Gastrocnemius medialis (tissue), 4 donors: ENCODE measurements at regions of chrX and their contacts with region 1.

Region 1: GRCh38 chrX:129606918-129607317 is 47.8 kb downstream of the APLN start:
- DNase-seq: no peak
- ATAC-seq: peak; percentile 65 to 68
- H3K4me3 ChIP-seq: no peak overlapping the region
- H3K27ac ChIP-seq: no peak overlapping the region
- H3K4me1 ChIP-seq: peaks cover 2 to 5% of the 10 kb centered on the region in 2 donors
- H3K27me3 ChIP-seq: no peaks in the 10 kb centered on the region
- CTCF ChIP-seq: peak; percentile 64 to 79 (median 72)
- POLR2A ChIP-seq: no peak

Region 2: DNA sequence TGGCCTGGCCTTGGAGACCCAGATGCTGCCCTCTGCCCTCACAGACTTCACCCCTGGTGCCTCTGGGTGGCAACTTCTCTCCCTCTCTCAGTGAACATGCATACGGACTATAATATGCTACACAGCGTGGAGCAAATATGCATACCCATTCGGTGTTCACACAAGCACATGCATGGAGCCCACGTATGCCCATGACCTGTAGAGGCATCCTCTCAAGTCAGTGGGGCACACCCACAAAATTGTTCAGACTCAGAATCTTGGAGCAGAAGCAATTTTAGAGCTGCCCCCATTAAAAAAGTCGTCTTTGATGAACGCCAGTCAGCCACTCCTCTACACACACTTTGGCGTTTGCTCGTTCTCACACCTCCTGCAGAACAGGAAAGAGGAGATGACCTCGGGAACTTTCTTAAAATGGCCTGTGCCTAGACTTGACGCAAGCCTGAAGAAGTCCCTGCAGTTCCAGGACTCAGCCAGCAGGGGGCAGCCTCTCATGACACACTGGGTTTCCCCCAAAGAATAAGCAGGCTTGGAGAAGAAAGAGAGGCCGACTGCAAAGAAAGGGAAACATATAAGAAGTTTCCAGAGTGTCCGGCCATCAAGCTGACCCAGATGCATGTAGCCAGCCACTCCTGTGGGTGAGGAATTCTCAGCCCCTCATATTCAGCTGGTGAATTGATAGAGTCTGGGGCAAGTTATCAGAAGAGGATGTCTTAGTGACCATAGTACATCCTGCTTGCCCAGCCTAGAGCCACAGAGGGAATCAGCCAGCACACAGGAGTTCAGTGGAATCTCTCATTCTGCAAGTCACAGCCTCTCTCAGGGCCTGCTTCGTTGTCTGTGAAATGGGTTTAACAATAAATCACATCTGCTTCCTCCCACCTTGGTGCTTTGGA is 30.5 kb after region 1 on chrX:
- in situ Hi-C with region 1: no loop called
- intact Hi-C with region 1: loop called (anchors 1 kb)
- DNase-seq: peak; percentile 30 to 63
- ATAC-seq: peak; percentile 36 to 83
- H3K4me3 ChIP-seq: no peak overlapping the region
- H3K27ac ChIP-seq: no peak overlapping the region
- H3K4me1 ChIP-seq: no peaks in the 10 kb centered on the region
- H3K27me3 ChIP-seq: no peaks in the 10 kb centered on the region
- CTCF ChIP-seq: peak; percentile 60 to 88 (median 84)
- POLR2A ChIP-seq: no peak

Region 3: DNA sequence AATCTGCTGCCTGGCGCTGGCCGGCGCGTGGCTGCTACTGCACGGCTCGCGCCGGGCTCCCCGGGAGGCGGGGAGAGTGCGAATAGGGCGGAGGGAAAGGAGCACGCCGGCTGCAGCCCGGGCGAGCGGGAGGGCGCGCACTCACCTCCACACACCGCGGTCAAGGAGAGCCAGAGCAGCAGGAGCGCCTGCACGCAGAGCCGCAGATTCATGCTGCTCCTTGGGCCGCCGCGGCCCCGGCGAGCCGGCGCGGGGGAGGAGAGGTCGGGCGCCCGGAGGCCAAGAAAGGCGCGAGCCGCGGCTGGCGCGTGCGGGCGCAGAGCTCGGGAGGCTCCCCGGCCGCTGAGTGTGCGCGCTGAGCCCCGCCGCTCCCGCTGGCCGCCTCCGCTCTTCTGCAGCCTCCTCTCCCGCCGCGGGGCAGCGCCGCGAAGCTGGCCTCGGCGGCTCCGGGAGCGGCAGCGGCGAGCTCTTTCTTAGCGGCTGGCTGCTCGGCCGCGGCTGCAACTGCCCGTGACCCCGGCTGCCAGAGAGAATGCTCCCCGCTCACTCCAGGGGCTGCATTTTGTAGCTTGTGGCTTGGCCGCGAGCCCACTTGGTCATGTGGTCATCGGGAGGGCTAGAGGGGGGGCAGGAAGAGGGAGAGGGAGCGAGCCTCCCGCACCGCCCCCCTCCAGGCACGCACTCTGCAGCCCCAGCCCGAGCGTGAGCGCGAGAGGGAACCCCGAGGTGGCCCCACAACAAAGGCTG is 47.7 kb after region 1 on chrX and contains the start of gene APLN:
- in situ Hi-C with region 1: no loop called
- intact Hi-C with region 1: loop called (anchors 5 kb)
- DNase-seq: no peak
- ATAC-seq: peak; percentile 53
- H3K4me3 ChIP-seq: peak within 1 kb of the TSS; percentile 47 to 62 (median 50)
- H3K27ac ChIP-seq: no peak within 1 kb of the TSS
- H3K4me1 ChIP-seq: peaks cover 0 to 9% of the 10 kb centered on the region in 2 donors
- H3K27me3 ChIP-seq: no peaks in the 10 kb centered on the region
- CTCF ChIP-seq: no peak
- POLR2A ChIP-seq: no peak
- total RNA-seq, gene APLN: not detected

Region 4: GRCh38 chrX:129665910-129666644 is 59.2 kb after region 1 on chrX:
- in situ Hi-C with region 1: no loop called
- intact Hi-C with region 1: no loop called
- DNase-seq: no peak
- ATAC-seq: peak in 1 of 2 donors; percentile 75
- H3K4me3 ChIP-seq: no peak overlapping the region
- H3K27ac ChIP-seq: no peak overlapping the region
- H3K4me1 ChIP-seq: no peaks in the 10 kb centered on the region
- H3K27me3 ChIP-seq: peaks cover 0 to 3% (median 0%) of the 10 kb centered on the region in 3 donors
- CTCF ChIP-seq: no peak
- POLR2A ChIP-seq: no peak

Region 5: GRCh38 chrX:129726307-129727111 is 119.6 kb after region 1 on chrX:
- in situ Hi-C with region 1: loop called in 1 of 4 experiments (anchors 10 kb)
- intact Hi-C with region 1: loop called (anchors 1 kb)
- DNase-seq: peak; percentile 21 to 37
- ATAC-seq: peak; percentile 54 to 62
- H3K4me3 ChIP-seq: no peak overlapping the region
- H3K27ac ChIP-seq: no peak overlapping the region
- H3K4me1 ChIP-seq: no peaks in the 10 kb centered on the region
- H3K27me3 ChIP-seq: no peaks in the 10 kb centered on the region
- CTCF ChIP-seq: peak; percentile 54 to 78 (median 76)
- POLR2A ChIP-seq: no peak

Region 6: DNA sequence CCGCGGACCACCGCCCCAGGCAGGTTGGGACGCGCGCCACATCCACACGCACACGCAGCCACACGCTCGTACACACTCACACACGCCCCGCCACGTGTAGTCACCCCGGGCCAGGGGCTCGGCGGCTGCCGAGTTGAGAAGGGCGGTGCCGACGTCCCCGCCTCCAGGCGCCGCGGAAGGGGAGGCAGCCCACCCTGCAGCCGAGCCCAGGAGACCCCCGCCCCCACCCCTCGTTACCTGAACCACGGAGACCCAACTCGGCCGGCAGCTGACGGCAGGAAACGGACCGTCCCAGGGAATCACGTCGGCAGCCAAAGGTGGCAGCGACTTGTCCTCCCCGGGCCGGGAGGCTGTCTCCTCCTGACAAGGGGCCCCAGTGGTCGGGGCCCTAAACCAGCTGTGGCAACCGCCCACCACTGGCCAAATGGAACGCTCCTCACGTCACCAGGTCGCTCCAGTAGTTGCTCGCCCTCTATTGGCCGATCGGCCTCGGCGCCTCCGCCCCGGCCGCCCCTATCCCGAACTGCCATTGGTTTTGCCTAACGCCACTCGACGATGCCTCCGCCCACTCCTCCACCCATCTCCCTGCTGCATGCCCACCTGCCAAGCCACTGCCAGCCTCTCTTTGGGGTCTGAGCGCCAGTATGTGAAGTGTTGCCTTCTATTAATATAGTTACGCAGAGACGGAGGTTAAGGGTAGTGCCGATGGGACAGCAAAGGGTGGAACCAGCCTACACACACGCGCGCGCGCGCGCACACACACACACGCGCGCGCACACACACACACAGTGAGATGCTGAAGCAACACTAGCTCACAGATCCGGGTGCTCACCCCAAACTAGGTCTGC is 236.8 kb after region 1 on chrX and contains the start of gene ZDHHC9:
- in situ Hi-C with region 1: loop called in 1 of 4 experiments (anchors 25 kb)
- intact Hi-C with region 1: loop called (anchors 10 kb)
- DNase-seq: peak; percentile 77 to 84
- ATAC-seq: peak; percentile 94 to 95
- H3K4me3 ChIP-seq: peak within 1 kb of the TSS; percentile 68 to 77 (median 72)
- H3K27ac ChIP-seq: peak within 1 kb of the TSS; percentile 76 to 89 (median 84)
- H3K4me1 ChIP-seq: no peaks in the 10 kb centered on the region
- H3K27me3 ChIP-seq: no peaks in the 10 kb centered on the region
- CTCF ChIP-seq: peak in 1 of 5 experiments; percentile 21
- POLR2A ChIP-seq: peak; percentile 54 to 61
- total RNA-seq, gene ZDHHC9: 7.9 to 25.3 (median 14.7) TPM

Region 7: DNA sequence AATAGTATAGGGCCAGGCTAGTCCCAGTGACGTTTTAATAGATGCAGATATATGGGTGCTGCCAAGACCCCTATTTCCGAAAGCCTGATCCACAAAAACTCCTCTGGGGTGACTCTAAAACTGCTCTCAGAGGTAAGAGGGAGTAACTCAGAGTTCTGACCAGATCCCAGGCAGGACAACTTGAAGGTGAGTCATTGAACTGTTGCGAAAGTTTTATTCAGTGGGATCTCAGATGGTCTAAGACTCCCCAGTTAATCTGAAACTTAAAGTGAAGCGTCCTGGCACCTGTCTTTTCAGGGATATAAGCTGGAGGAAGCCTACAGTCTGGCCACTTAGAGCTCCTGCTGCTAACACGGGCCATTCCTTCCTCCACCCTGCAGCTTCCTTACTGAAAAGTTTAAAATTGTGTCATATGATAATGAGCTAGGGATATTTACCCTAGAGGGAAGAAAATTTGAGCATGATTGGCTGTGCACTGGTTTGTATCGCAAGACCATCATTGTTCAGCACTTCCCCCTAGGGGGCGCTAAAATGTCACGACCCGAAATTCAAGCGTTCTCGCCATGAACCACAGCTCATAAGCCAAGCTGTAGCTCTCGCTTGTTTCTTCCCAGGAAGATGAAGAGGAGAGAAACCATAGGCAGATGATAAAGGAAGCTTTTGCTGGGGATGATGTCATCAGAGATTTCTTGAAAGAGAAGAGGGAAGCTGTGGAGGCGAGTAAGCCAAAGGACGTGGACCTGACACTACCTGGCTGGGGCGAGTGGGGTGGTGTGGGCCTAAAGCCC is 318.6 kb after region 1 on chrX:
- in situ Hi-C with region 1: no loop called
- intact Hi-C with region 1: loop called (anchors 10 kb)
- DNase-seq: peak; percentile 25 to 56
- ATAC-seq: peak; percentile 62 to 93
- H3K4me3 ChIP-seq: no peak overlapping the region
- H3K27ac ChIP-seq: no peak overlapping the region
- H3K4me1 ChIP-seq: no peaks in the 10 kb centered on the region
- H3K27me3 ChIP-seq: no peaks in the 10 kb centered on the region
- CTCF ChIP-seq: peak; percentile 32 to 68 (median 61)
- POLR2A ChIP-seq: no peak

Region 8: GRCh38 chrX:130060122-130061069 is 453.5 kb after region 1 on chrX:
- in situ Hi-C with region 1: loop called (anchors 10 to 25 kb)
- intact Hi-C with region 1: loop called (anchors 2 kb)
- DNase-seq: peak; percentile 45 to 65
- ATAC-seq: peak; percentile 91 to 94
- H3K4me3 ChIP-seq: peak overlapping the region; percentile 56 to 70 (median 58)
- H3K27ac ChIP-seq: peak overlapping the region; percentile 64 to 76 (median 68)
- H3K4me1 ChIP-seq: peaks cover 0 to 6% of the 10 kb centered on the region in 2 donors
- H3K27me3 ChIP-seq: no peaks in the 10 kb centered on the region
- CTCF ChIP-seq: peak; percentile 80 to 92 (median 88)
- POLR2A ChIP-seq: no peak